Heart left ventricle (tissue), 16 donors: ENCODE measurements at regions of chr12 and their contacts with region 1.

Region 1: DNA sequence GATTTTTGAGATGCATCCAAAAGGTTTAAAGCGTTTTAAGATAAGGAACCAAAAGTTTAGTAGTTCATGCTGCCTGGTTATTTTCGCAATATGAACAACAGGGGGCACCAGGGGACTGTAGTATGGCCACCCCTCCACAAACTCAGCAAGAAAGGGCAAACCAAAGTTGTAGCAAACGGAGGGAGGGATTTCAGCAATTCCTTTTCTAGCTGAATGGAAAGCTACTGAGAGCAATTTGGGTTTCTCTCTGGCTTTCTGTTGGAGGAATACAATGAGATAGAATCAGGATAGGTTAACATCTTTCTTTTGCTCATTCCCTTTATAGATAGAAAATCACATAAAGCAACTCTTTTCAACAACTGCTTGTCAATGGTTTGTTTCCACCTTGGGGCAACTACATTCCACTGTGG is 62.5 kb downstream of the DRAM1 start:
- DNase-seq: peak in 4 of 5 donors; percentile 37 to 50 (median 39)
- ATAC-seq: peak in 3 of 4 donors; percentile 33 to 48 (median 41)
- H3K4me3 ChIP-seq: no peak overlapping the region
- H3K27ac ChIP-seq: peak overlapping the region in 9 of 12 donors; percentile 11 to 62 (median 41)
- H3K4me1 ChIP-seq: peaks cover 0 to 31% (median 2%) of the 10 kb centered on the region in 12 donors
- H3K27me3 ChIP-seq: no peaks in the 10 kb centered on the region
- CTCF ChIP-seq: peak; percentile 37 to 75 (median 62)
- POLR2A ChIP-seq: no peak

Region 2: DNA sequence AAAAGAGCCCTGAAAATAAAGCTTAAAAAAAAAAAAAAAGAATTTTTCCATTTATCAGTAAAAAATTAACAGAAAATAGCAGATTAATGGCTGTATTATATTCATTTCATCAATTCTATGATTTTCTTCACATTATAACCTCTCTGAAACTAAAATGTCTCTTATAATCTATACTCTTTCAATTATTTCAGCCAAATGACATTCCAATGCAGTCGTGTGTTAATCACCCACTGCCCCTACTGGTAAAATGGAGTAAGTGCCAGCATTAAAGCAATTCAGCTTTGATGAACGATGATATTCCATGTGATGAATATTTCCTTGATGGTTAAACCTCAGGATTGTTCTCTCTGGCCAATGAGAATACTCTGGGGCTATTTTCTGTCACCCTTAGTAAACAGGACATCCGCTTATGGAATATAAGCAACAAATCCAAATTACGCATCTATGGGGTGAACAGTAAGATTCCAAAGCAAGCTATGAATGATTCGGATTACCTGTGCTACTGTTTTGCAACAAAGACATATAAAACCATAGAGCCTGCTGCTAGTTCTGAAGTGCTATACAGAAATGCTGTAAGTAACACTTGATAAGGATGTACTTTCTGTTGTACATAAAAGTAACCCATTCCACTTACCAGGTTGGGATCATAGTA is 180.3 kb before region 1 on chr12:
- intact Hi-C with region 1: no loop called
- DNase-seq: no peak
- ATAC-seq: peak in 2 of 4 donors; percentile 30 to 38
- H3K4me3 ChIP-seq: no peak overlapping the region
- H3K27ac ChIP-seq: no peak overlapping the region
- H3K4me1 ChIP-seq: peaks cover 0 to 26% (median 0%) of the 10 kb centered on the region in 12 donors
- H3K27me3 ChIP-seq: no peaks in the 10 kb centered on the region
- CTCF ChIP-seq: peak; percentile 48 to 76 (median 66)
- POLR2A ChIP-seq: no peak

Region 3: GRCh38 chr12:102484428-102484958 is 544.6 kb after region 1 on chr12:
- intact Hi-C with region 1: loop called in 7 of 10 experiments (anchors 5 kb)
- DNase-seq: peak in 4 of 5 donors; percentile 35 to 56 (median 44)
- ATAC-seq: peak in 3 of 4 donors; percentile 32 to 70 (median 44)
- H3K4me3 ChIP-seq: peak overlapping the region in 6 of 12 donors; percentile 6 to 41 (median 31)
- H3K27ac ChIP-seq: peak overlapping the region in 8 of 12 donors; percentile 1 to 78 (median 50)
- H3K4me1 ChIP-seq: peaks cover 0 to 21% (median 3%) of the 10 kb centered on the region in 12 donors
- H3K27me3 ChIP-seq: no peaks in the 10 kb centered on the region
- CTCF ChIP-seq: peak; percentile 85 to 96 (median 90)
- POLR2A ChIP-seq: no peak

Region 4: DNA sequence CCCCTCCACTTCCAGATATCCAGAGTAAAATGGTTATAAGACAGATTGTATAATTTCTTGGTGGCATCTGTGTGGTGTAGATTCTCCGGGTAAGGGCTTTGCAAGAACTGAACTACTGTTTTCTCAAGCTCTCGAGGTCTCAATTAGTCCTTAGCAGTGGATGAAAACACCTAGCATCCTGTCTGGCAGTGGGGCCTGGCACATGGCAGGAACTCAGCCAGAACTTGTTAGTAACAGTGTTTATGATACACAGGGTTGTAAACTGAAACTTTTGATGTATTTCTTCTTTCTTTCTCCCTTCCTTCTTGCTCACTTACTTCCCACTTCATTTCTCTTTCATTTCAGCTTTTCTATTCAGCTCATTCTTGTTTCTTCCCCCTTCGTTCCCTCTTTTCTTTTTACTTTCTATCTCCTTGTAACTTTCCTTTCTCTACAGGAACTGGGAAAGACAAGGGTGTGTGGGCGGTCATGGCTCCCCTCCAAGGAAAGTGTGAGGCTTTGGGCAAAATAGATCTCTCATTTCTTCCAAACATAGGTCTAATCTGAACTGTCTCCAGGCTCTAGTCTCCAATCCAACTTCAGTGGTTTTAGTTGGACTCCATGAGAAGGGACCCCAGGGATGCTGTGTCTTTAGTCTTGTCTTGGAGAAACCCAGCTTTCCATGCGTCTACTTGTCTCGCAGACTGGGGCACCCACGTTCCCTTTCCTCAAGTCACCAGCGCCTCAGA is 817.5 kb after region 1 on chr12:
- intact Hi-C with region 1: loop called in 4 of 10 experiments (anchors 10 kb)
- DNase-seq: peak; percentile 59 to 75 (median 67)
- ATAC-seq: peak in 3 of 4 donors; percentile 41 to 75 (median 60)
- H3K4me3 ChIP-seq: peak overlapping the region in 1 of 12 donors; percentile 8
- H3K27ac ChIP-seq: peak overlapping the region in 11 of 12 donors; percentile 24 to 90 (median 54)
- H3K4me1 ChIP-seq: peaks cover 0 to 12% (median 0%) of the 10 kb centered on the region in 12 donors
- H3K27me3 ChIP-seq: no peaks in the 10 kb centered on the region
- CTCF ChIP-seq: no peak
- POLR2A ChIP-seq: no peak

Region 5: DNA sequence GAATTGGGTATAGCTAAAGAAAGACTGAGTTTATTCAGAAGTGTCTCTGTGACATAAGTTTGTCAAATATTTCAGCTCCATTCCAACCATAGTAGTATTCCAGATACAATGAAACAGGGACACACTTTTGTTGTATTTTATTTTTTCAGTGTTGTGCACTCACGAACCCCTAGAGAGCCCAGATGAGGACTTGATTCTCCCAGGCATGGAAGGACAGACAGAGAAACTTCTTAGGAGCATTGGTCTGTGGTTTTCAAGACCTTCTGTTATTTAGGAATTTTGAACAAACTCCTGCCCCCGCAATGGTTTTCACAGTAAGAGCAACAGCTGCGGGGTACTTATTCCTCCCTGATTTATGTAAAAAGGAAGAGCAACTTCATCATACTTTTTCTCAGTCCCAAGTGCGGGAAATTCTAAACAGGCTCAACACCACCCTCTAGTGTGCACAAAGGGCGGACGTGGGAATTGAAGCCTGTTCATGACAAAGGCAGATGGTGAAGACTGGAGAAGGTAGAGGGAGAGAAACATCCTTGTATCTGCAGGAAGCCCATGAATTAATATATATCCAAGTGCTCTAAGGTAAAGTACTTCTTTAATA is 829.6 kb after region 1 on chr12:
- intact Hi-C with region 1: loop called in 3 of 10 experiments (anchors 5 to 10 kb)
- DNase-seq: peak; percentile 38 to 64 (median 47)
- ATAC-seq: peak; percentile 60 to 88 (median 69)
- H3K4me3 ChIP-seq: no peak overlapping the region
- H3K27ac ChIP-seq: peak overlapping the region in 3 of 12 donors; percentile 20 to 60 (median 36)
- H3K4me1 ChIP-seq: no peaks in the 10 kb centered on the region
- H3K27me3 ChIP-seq: no peaks in the 10 kb centered on the region
- CTCF ChIP-seq: peak; percentile 23 to 68 (median 47)
- POLR2A ChIP-seq: no peak

Region 6: GRCh38 chr12:103548622-103549601 is 1609.1 kb after region 1 on chr12:
- intact Hi-C with region 1: loop called in 4 of 10 experiments (anchors 5 to 10 kb)
- DNase-seq: peak in 4 of 5 donors; percentile 35 to 55 (median 37)
- ATAC-seq: peak in 2 of 4 donors; percentile 50 to 59
- H3K4me3 ChIP-seq: no peak overlapping the region
- H3K27ac ChIP-seq: no peak overlapping the region
- H3K4me1 ChIP-seq: no peaks in the 10 kb centered on the region
- H3K27me3 ChIP-seq: peaks cover 0 to 30% (median 0%) of the 10 kb centered on the region in 9 donors
- CTCF ChIP-seq: peak; percentile 51 to 82 (median 75)
- POLR2A ChIP-seq: no peak